GM10248 (cell line): ENCODE measurements at regions of chr19 and their contacts with region 1.

Region 1: GRCh38 chr19:17125715-17126677 is 50.4 kb downstream of the MYO9B start:
- DNase-seq: peak; percentile 80
- CTCF ChIP-seq: no peak

Region 2: DNA sequence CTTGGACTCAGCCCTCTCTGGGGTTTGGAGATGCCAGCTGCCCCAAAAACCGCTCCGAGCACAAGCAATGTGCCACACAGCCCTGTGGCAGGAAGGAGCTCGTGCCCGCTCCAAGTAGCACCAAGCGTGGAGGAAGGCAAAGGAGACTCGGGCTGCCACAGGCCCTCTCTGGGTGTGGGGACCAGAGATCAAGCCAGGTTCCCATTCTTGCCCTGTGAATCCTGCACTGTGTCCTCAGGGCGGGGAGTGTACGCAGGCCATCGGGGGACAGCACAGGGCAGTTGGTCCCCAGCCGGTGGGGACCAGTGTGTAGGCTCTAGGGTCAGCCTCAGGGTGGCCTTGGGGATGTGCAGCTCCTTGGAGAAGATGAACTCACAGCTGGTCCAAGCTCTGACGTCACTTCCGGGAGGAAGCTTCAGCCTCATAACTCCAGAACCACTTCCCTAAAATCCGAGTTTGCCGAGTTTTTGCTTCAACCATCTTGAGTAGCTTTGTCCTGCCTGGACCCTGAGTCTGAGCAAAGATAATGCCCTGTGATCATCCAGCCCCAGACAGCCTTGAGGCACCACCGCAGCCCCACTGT is 90.1 kb before region 1 on chr19:
- CTCF ChIA-PET with region 1: no interaction called
- POLR2A ChIA-PET with region 1: no interaction called
- DNase-seq: no peak
- CTCF ChIP-seq: no peak

Region 3: DNA sequence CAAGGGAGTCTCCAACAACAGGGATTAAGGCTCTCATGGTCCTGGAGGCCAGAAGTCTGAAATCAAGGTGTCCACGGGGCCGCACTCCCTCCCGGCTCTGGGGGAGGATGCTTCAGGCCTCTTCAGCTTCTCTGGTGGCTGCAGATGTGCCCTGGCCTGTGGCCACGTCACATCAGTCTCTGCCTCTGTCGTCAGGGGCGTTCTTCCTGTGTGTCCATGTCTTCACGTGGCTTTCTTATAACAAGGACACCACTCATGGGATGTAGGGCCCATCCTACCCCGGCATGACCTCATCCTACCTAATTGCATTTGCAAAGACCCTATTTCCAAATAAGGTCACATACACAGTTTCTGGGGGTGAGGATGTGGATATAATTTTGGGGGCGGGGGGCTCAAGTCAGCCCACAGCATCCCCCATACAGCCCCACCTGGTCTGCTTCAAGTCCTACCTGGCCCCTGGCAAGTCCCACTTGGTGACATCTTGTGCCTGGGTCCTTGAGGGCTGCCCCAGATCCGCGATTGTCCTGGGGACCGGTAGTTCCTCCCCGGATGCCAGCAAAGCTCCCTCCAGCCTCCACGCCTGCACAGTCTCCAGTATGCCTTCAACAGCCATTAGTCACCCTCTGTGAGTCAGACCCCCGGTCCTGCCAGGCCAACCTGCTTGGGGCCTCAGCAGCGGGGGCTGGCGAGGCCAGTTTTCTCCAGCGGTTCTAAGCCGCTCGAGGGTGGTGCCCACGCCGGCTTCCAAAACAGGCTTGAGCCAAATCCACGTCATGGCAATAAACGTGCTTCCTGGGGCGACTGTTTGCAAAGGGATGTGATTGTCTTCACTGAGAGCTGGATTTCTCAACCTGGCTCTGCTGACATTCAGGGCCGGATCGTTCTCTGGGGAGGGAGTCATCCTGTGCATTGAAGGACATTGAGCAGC is 18.2 kb before region 1 on chr19:
- CTCF ChIA-PET with region 1: interaction called, 15 read pairs
- POLR2A ChIA-PET with region 1: interaction called, 7 read pairs
- DNase-seq: no peak
- CTCF ChIP-seq: no peak